CD8-positive, alpha-beta T cell (primary cell): ENCODE measurements at regions of chr3 and their contacts with region 1.

Region 1: DNA sequence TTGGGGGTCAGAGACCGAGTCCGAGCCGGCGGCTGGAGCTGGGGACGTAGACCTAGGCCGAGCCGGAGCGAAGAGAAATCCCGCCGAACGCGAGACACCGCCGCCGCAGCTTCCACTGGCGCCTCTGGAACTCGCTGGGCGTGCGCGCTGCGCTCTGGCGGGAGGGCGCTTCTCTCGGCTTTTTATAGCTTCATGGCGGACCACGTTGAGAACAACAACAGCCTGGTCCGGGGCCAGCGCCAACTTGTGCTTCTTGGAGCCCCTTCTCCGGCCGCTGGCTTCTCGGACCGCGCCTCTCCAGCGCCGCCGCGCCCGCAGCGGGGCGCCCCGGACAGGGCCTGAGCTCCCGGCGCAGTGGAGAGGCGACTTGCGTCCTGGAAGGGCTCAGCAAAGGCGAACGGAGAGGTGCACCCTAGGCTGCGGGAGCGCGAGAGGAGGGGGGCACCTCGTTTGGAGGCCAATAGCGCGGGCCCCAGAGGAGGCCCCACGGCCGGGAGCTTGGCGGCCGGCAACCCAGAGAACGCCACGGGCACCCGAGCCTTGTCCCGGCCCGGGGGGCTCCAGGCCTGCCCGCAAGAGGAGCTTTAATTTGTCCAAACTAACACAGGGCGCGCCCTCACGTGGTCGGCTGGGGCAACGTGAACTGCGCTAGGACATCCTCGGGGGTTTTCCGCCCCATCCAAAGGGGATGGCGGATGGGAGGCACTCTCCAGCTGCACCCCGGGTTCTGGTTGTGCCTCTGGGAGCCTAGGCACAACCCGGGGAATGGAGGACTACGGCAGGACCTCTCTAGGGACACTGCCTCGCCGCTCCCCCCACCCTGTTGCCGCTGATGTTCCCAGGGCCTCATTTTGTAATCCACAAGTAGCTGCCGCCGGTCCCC is 37.7 kb downstream of the HMCES start:
- DNase-seq: peak; percentile 79 to 96 (median 89)
- ATAC-seq: peak; percentile 45
- H3K4me3 ChIP-seq: peak overlapping the region; percentile 94 to 98
- H3K4me3 Mint-ChIP-seq: peak overlapping the region; percentile 95
- H3K27ac ChIP-seq: peak overlapping the region; percentile 55 to 84
- H3K27ac Mint-ChIP-seq: peak overlapping the region; percentile 88
- H3K4me1 ChIP-seq: peaks cover 16% of the 10 kb centered on the region
- H3K4me1 Mint-ChIP-seq: peaks cover 25% of the 10 kb centered on the region
- H3K27me3 ChIP-seq: no peaks in the 10 kb centered on the region
- H3K27me3 Mint-ChIP-seq: no peaks in the 10 kb centered on the region
- CTCF ChIP-seq: peak; percentile 68

Region 2: GRCh38 chr3:128650096-128651050 is 666.0 kb before region 1 on chr3 and contains the start of gene RPN1:
- CTCF ChIA-PET with region 1: no interaction called
- POLR2A ChIA-PET with region 1: interaction called, 3 read pairs
- intact Hi-C with region 1: loop called in 1 of 2 experiments (anchors 5 kb)
- DNase-seq: peak; percentile 90 to 97 (median 95)
- ATAC-seq: peak; percentile 96
- H3K4me3 ChIP-seq: peak within 1 kb of the TSS; percentile 97
- H3K4me3 Mint-ChIP-seq: peak within 1 kb of the TSS; percentile 82
- H3K27ac ChIP-seq: peak within 1 kb of the TSS; percentile 95 to 96
- H3K27ac Mint-ChIP-seq: peak within 1 kb of the TSS; percentile 88
- H3K4me1 ChIP-seq: peaks cover 24% of the 10 kb centered on the region
- H3K4me1 Mint-ChIP-seq: peaks cover 47% of the 10 kb centered on the region
- H3K27me3 ChIP-seq: no peaks in the 10 kb centered on the region
- H3K27me3 Mint-ChIP-seq: no peaks in the 10 kb centered on the region
- CTCF ChIP-seq: no peak
- total RNA-seq, gene RPN1: 65.7 to 76.5 TPM

Region 3: GRCh38 chr3:129160891-129161859 is 155.2 kb before region 1 on chr3 and contains the start of gene ISY1:
- CTCF ChIA-PET with region 1: no interaction called
- POLR2A ChIA-PET with region 1: interaction called, 11 read pairs
- intact Hi-C with region 1: no loop called
- DNase-seq: peak; percentile 71 to 97 (median 86)
- ATAC-seq: peak; percentile 80
- H3K4me3 ChIP-seq: peak within 1 kb of the TSS; percentile 84 to 94
- H3K4me3 Mint-ChIP-seq: peak within 1 kb of the TSS; percentile 95
- H3K27ac ChIP-seq: peak within 1 kb of the TSS; percentile 92 to 99
- H3K27ac Mint-ChIP-seq: peak within 1 kb of the TSS; percentile 96
- H3K4me1 ChIP-seq: peaks cover 18% of the 10 kb centered on the region
- H3K4me1 Mint-ChIP-seq: peaks cover 43% of the 10 kb centered on the region
- H3K27me3 ChIP-seq: no peaks in the 10 kb centered on the region
- H3K27me3 Mint-ChIP-seq: no peaks in the 10 kb centered on the region
- CTCF ChIP-seq: peak; percentile 70
- total RNA-seq, gene ISY1: 35.2 to 38.7 TPM

Region 4: GRCh38 chr3:129271674-129272073 is 44.7 kb before region 1 on chr3:
- CTCF ChIA-PET with region 1: interaction called, 3 read pairs
- POLR2A ChIA-PET with region 1: interaction called, 10 read pairs
- intact Hi-C with region 1: no loop called
- DNase-seq: no peak
- ATAC-seq: no peak
- H3K4me3 ChIP-seq: no peak overlapping the region
- H3K4me3 Mint-ChIP-seq: no peak overlapping the region
- H3K27ac ChIP-seq: no peak overlapping the region
- H3K27ac Mint-ChIP-seq: peak overlapping the region; percentile 2
- H3K4me1 ChIP-seq: no peaks in the 10 kb centered on the region
- H3K4me1 Mint-ChIP-seq: no peaks in the 10 kb centered on the region
- H3K27me3 ChIP-seq: no peaks in the 10 kb centered on the region
- H3K27me3 Mint-ChIP-seq: no peaks in the 10 kb centered on the region
- CTCF ChIP-seq: no peak

Region 5: DNA sequence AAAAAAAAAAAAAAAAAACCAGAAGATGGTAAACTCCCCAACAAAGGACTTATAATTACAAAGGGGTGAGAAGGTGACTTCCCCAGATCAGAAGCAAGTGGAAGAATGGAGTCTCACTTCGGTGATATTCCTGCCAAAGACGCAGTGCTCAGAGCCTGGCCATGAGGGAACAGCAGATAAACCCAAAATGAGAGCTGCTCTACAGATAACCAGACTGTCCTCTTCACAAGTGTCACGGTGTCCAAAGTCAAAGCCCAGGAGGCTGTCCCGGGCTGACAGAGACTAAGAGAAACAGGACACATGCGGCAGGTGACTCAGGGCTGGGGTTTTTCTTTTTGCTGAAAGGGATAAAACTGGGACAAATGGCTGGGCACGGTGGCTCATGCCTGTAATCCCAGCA is 11.1 kb after region 1 on chr3:
- CTCF ChIA-PET with region 1: interaction called, 13 read pairs
- POLR2A ChIA-PET with region 1: interaction called, 7 read pairs
- intact Hi-C with region 1: no loop called
- DNase-seq: no peak
- ATAC-seq: no peak
- H3K4me3 ChIP-seq: no peak overlapping the region
- H3K4me3 Mint-ChIP-seq: no peak overlapping the region
- H3K27ac ChIP-seq: no peak overlapping the region
- H3K27ac Mint-ChIP-seq: no peak overlapping the region
- H3K4me1 ChIP-seq: no peaks in the 10 kb centered on the region
- H3K4me1 Mint-ChIP-seq: no peaks in the 10 kb centered on the region
- H3K27me3 ChIP-seq: no peaks in the 10 kb centered on the region
- H3K27me3 Mint-ChIP-seq: no peaks in the 10 kb centered on the region
- CTCF ChIP-seq: no peak

Region 6: GRCh38 chr3:129893581-129894070 is 577.3 kb after region 1 on chr3 and contains the start of gene TMCC1:
- CTCF ChIA-PET with region 1: no interaction called
- POLR2A ChIA-PET with region 1: interaction called, 3 read pairs
- intact Hi-C with region 1: loop called in 1 of 2 experiments (anchors 5 kb)
- DNase-seq: peak; percentile 72 to 96 (median 90)
- ATAC-seq: peak; percentile 94
- H3K4me3 ChIP-seq: peak within 1 kb of the TSS; percentile 91 to 97
- H3K4me3 Mint-ChIP-seq: peak within 1 kb of the TSS; percentile 90
- H3K27ac ChIP-seq: peak within 1 kb of the TSS; percentile 91 to 93
- H3K27ac Mint-ChIP-seq: peak within 1 kb of the TSS; percentile 93
- H3K4me1 ChIP-seq: peaks cover 39% of the 10 kb centered on the region
- H3K4me1 Mint-ChIP-seq: peaks cover 43% of the 10 kb centered on the region
- H3K27me3 ChIP-seq: no peaks in the 10 kb centered on the region
- H3K27me3 Mint-ChIP-seq: no peaks in the 10 kb centered on the region
- CTCF ChIP-seq: no peak
- total RNA-seq, gene TMCC1: 30.0 to 33.1 TPM